Prostate gland (tissue), 2 donors: ENCODE measurements at regions of chrX and their contacts with region 1.

Region 1: DNA sequence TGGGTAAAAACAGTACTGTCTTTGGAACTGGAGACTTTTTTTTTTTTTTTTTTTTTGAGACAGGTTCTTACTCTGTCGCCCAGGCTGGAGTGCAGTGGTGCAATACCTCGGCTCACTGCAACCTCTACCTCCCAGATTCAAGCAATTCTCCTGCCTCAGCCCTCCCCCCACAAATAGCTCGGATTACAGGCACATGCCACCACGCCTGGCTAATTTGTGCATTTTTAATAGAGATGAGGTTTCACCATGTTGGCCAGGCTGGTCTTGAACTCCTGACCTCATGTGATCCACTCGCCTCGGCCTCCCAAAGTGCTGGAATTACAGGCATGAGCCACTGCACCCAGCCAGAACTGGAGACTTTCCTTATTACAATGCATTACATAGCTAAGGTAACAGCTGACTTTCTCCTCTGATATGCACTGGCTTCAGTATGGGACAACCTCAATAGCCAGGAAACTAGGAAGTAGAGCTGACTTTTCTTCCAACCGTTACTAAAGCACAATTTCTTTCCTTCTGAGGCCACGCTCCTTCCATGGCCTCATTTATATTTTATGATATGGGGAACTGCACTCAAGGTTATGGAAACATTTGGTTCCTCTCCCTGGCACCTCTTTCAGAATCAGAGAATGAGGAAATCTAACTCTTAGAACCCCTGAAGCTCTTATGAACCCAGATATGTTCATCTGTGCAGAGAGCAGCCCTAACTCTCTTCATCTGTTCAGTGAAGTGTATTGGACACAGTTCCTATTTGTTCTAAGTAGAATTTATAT is 53.5 kb upstream of the FAM9B start:
- DNase-seq: no peak
- H3K4me3 ChIP-seq: no peak overlapping the region
- H3K27ac ChIP-seq: no peak overlapping the region
- H3K4me1 ChIP-seq: no peaks in the 10 kb centered on the region
- H3K27me3 ChIP-seq: no peaks in the 10 kb centered on the region
- CTCF ChIP-seq: no peak
- POLR2A ChIP-seq: no peak

Region 2: DNA sequence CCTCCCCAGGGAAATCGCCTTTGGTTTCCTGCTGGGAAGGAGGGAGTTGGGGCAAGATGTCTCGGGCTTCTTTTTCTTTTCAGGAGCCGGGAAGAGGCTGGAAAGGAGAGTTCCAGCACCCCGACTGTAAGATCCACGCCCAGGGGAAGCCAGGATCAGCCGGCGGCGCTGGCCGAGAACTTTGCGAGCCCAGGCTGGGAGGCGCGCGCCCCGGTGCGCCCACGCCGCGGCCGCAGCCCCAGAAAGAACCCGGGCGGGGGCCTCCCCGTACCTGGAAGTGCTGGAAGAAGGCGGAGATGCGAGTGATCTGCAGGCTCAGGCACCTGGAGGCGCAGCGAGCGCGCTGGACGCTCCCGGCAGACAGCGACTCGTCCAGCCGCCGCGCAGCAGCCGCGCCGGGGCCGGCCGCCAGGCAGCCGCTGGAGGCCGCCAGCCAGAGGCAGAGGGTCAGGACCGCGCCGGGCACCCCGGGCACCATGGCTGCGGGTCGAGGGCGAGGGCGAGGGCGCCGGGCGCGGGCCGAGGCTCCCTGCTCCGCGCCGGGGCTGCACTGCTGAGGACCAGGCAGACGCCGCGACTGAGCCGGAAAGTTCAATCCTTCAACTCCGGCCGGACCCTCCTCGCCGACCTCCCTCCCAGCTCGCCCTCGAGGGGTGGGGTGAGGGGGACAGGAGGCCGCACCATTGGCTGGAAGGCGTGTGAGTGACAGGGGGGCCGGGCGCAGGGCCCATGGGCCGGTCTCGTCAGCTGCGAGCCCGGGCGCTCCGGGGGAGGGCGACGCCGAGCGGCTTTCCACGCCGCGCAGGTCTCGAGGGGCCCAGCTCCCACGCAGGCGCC is 355.7 kb before region 1 on chrX and contains the start of gene ANOS1:
- intact Hi-C with region 1: no loop called
- DNase-seq: peak; percentile 70
- H3K4me3 ChIP-seq: peak within 1 kb of the TSS; percentile 37 to 47
- H3K27ac ChIP-seq: peak within 1 kb of the TSS; percentile 8 to 54
- H3K4me1 ChIP-seq: no peaks in the 10 kb centered on the region
- H3K27me3 ChIP-seq: no peaks in the 10 kb centered on the region
- CTCF ChIP-seq: no peak
- POLR2A ChIP-seq: no peak
- total RNA-seq, gene ANOS1: 23.6 to 31.9 TPM

Region 3: GRCh38 chrX:9148621-9149385 is 61.3 kb after region 1 on chrX:
- intact Hi-C with region 1: loop called (anchors 10 kb)
- DNase-seq: no peak
- H3K4me3 ChIP-seq: no peak overlapping the region
- H3K27ac ChIP-seq: no peak overlapping the region
- H3K4me1 ChIP-seq: no peaks in the 10 kb centered on the region
- H3K27me3 ChIP-seq: no peaks in the 10 kb centered on the region
- CTCF ChIP-seq: no peak
- POLR2A ChIP-seq: no peak

Region 4: DNA sequence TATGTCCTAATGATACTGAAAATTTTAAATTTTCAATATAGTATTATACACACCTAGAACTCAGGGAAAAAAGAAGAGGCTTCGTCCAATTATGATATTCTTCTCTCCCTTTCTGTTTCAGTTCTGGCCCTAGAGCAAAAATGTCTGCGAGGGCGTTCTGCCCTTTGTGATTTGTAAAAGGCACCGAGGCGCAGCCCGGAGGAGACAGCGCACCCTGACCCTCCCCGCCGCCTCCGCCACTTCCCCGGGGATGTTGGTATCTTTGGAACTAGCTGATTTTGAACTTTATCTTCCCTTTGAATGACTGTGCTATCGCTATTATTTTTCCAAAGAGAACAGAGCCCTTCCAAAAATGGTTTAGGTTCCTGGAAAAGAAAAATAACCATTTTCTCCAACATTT is 119.7 kb after region 1 on chrX:
- intact Hi-C with region 1: loop called (anchors 10 kb)
- DNase-seq: no peak
- H3K4me3 ChIP-seq: no peak overlapping the region
- H3K27ac ChIP-seq: no peak overlapping the region
- H3K4me1 ChIP-seq: no peaks in the 10 kb centered on the region
- H3K27me3 ChIP-seq: no peaks in the 10 kb centered on the region
- CTCF ChIP-seq: no peak
- POLR2A ChIP-seq: no peak